CD8-positive, alpha-beta T cell (primary cell): ENCODE measurements at regions of chr14 and their contacts with region 1.

Region 1: GRCh38 chr14:91836119-91836881 is 31.0 kb downstream of the TC2N start:
- DNase-seq: peak; percentile 68 to 93 (median 88)
- ATAC-seq: peak; percentile 95
- H3K4me3 ChIP-seq: peak overlapping the region; percentile 55 to 70
- H3K4me3 Mint-ChIP-seq: peak overlapping the region; percentile 93
- H3K27ac ChIP-seq: peak overlapping the region; percentile 46 to 57
- H3K27ac Mint-ChIP-seq: peak overlapping the region; percentile 96
- H3K4me1 ChIP-seq: peaks cover 24% of the 10 kb centered on the region
- H3K4me1 Mint-ChIP-seq: peaks cover 80% of the 10 kb centered on the region
- H3K27me3 ChIP-seq: no peaks in the 10 kb centered on the region
- H3K27me3 Mint-ChIP-seq: no peaks in the 10 kb centered on the region
- CTCF ChIP-seq: no peak

Region 2: DNA sequence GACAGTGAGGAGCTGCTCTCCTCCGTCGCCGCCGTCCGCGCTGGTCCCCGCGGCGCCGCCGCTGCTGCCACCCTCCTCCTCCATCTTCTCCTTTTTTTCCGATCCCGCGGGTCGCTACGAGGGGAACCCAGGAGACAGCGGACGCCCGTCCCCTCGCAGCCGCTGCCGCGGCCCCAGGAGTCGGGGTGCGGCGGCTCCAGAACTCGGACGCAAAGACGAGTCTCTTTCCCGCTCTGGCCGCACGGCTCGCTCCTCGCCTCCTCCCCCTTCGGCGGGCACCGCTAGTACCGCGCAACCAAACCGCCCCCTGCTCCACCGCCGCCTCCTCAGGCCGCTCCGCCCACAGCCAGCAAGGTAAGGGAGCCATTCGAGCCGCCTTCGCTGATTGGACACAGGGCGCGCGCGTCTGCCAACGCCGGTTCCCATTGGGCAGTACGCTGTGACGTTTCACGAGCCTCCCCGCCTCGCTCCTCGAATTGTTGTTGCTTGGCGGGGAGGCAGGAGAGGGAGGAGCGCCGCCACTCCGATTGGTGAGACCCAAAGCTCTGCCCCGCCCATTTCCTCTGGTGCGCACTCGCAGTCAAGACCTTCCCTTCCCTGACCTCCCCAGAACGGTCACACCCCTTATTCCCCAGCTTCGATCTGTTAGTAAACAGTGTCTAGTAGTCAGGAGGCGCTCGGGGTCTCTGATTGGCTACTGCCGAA is 775.8 kb before region 1 on chr14 and contains the start of gene RPS6KA5:
- CTCF ChIA-PET with region 1: no interaction called
- POLR2A ChIA-PET with region 1: no interaction called
- intact Hi-C with region 1: no loop called
- DNase-seq: peak; percentile 99 to 100 (median 100)
- ATAC-seq: peak; percentile 82
- H3K4me3 ChIP-seq: peak within 1 kb of the TSS; percentile 66 to 84
- H3K4me3 Mint-ChIP-seq: peak within 1 kb of the TSS; percentile 81
- H3K27ac ChIP-seq: peak within 1 kb of the TSS; percentile 94 to 96
- H3K27ac Mint-ChIP-seq: peak within 1 kb of the TSS; percentile 35
- H3K4me1 ChIP-seq: peaks cover 38% of the 10 kb centered on the region
- H3K4me1 Mint-ChIP-seq: peaks cover 55% of the 10 kb centered on the region
- H3K27me3 ChIP-seq: no peaks in the 10 kb centered on the region
- H3K27me3 Mint-ChIP-seq: no peaks in the 10 kb centered on the region
- CTCF ChIP-seq: no peak
- total RNA-seq, gene RPS6KA5: 17.7 to 18.3 TPM

Region 3: GRCh38 chr14:91722386-91722785 is 113.9 kb before region 1 on chr14:
- CTCF ChIA-PET with region 1: no interaction called
- POLR2A ChIA-PET with region 1: no interaction called
- intact Hi-C with region 1: no loop called
- DNase-seq: no peak
- ATAC-seq: no peak
- H3K4me3 ChIP-seq: no peak overlapping the region
- H3K4me3 Mint-ChIP-seq: no peak overlapping the region
- H3K27ac ChIP-seq: no peak overlapping the region
- H3K27ac Mint-ChIP-seq: no peak overlapping the region
- H3K4me1 ChIP-seq: peaks cover 7% of the 10 kb centered on the region
- H3K4me1 Mint-ChIP-seq: peaks cover 8% of the 10 kb centered on the region
- H3K27me3 ChIP-seq: no peaks in the 10 kb centered on the region
- H3K27me3 Mint-ChIP-seq: no peaks in the 10 kb centered on the region
- CTCF ChIP-seq: no peak

Region 4: GRCh38 chr14:91796617-91797347 is 39.5 kb before region 1 on chr14:
- CTCF ChIA-PET with region 1: no interaction called
- POLR2A ChIA-PET with region 1: no interaction called
- intact Hi-C with region 1: loop called in 1 of 2 experiments (anchors 5 kb)
- DNase-seq: no peak
- ATAC-seq: no peak
- H3K4me3 ChIP-seq: no peak overlapping the region
- H3K4me3 Mint-ChIP-seq: no peak overlapping the region
- H3K27ac ChIP-seq: no peak overlapping the region
- H3K27ac Mint-ChIP-seq: peak overlapping the region; percentile 80
- H3K4me1 ChIP-seq: no peaks in the 10 kb centered on the region
- H3K4me1 Mint-ChIP-seq: peaks cover 33% of the 10 kb centered on the region
- H3K27me3 ChIP-seq: no peaks in the 10 kb centered on the region
- H3K27me3 Mint-ChIP-seq: no peaks in the 10 kb centered on the region
- CTCF ChIP-seq: no peak

Region 5: GRCh38 chr14:91866061-91866460 is 29.8 kb after region 1 on chr14:
- CTCF ChIA-PET with region 1: interaction called, 3 read pairs
- POLR2A ChIA-PET with region 1: interaction called, 12 read pairs
- intact Hi-C with region 1: loop called (anchors 2 kb)
- DNase-seq: peak in 5 of 9 experiments; percentile 25 to 59 (median 32)
- ATAC-seq: no peak
- H3K4me3 ChIP-seq: peak overlapping the region; percentile 61 to 80
- H3K4me3 Mint-ChIP-seq: peak overlapping the region; percentile 95
- H3K27ac ChIP-seq: peak overlapping the region; percentile 83 to 86
- H3K27ac Mint-ChIP-seq: peak overlapping the region; percentile 99
- H3K4me1 ChIP-seq: peaks cover 82% of the 10 kb centered on the region
- H3K4me1 Mint-ChIP-seq: peaks cover 90% of the 10 kb centered on the region
- H3K27me3 ChIP-seq: no peaks in the 10 kb centered on the region
- H3K27me3 Mint-ChIP-seq: no peaks in the 10 kb centered on the region
- CTCF ChIP-seq: no peak

Region 6: DNA sequence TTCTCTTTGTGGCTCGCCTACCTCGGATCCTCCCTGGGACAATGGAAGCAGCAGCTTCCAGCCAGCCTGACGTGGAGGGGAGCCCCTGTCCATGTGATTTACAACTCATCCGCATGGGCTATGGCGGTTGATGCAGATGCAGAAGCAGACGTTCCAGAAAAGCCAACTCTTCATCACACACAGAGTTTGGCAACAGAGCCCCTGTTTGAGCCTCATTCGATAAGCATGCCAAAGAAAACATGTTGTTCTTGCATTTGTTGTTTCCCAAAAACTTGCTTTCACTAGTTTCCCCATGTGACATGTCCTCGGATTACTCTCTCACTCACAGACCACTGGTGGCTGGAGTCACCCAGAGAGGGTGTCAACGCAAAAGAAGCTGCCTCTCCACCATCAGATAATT is 47.5 kb after region 1 on chr14:
- CTCF ChIA-PET with region 1: no interaction called
- POLR2A ChIA-PET with region 1: interaction called, 4 read pairs
- intact Hi-C with region 1: loop called in 1 of 2 experiments (anchors 1 kb)
- DNase-seq: no peak
- ATAC-seq: no peak
- H3K4me3 ChIP-seq: no peak overlapping the region
- H3K4me3 Mint-ChIP-seq: no peak overlapping the region
- H3K27ac ChIP-seq: no peak overlapping the region
- H3K27ac Mint-ChIP-seq: no peak overlapping the region
- H3K4me1 ChIP-seq: peaks cover 20% of the 10 kb centered on the region
- H3K4me1 Mint-ChIP-seq: peaks cover 52% of the 10 kb centered on the region
- H3K27me3 ChIP-seq: no peaks in the 10 kb centered on the region
- H3K27me3 Mint-ChIP-seq: no peaks in the 10 kb centered on the region
- CTCF ChIP-seq: no peak

Region 7: GRCh38 chr14:91899212-91899611 is 62.9 kb after region 1 on chr14:
- CTCF ChIA-PET with region 1: interaction called, 8 read pairs
- POLR2A ChIA-PET with region 1: interaction called, 6 read pairs
- intact Hi-C with region 1: loop called in 1 of 2 experiments (anchors 2 kb)
- DNase-seq: peak in 3 of 9 experiments; percentile 30 to 53 (median 49)
- ATAC-seq: no peak
- H3K4me3 ChIP-seq: no peak overlapping the region
- H3K4me3 Mint-ChIP-seq: no peak overlapping the region
- H3K27ac ChIP-seq: no peak overlapping the region
- H3K27ac Mint-ChIP-seq: no peak overlapping the region
- H3K4me1 ChIP-seq: peaks cover under 1% of the 10 kb centered on the region
- H3K4me1 Mint-ChIP-seq: peaks cover 19% of the 10 kb centered on the region
- H3K27me3 ChIP-seq: no peaks in the 10 kb centered on the region
- H3K27me3 Mint-ChIP-seq: no peaks in the 10 kb centered on the region
- CTCF ChIP-seq: no peak